Panc1 (cell line): ENCODE measurements at regions of chr16 and their contacts with region 1.

Region 1: GRCh38 chr16:85675251-85675927 is 13.4 kb downstream of the GINS2 start:
- DNase-seq: no peak
- ATAC-seq: peak; percentile 54; the same call in 1 of the 2 replicates
- H3K4me3 ChIP-seq: no peak overlapping the region
- H3K27ac ChIP-seq: no peak overlapping the region
- H3K4me1 ChIP-seq: peaks cover 22% of the 10 kb centered on the region
- H3K27me3 ChIP-seq: no peaks in the 10 kb centered on the region
- CTCF ChIP-seq: peak; percentile 52; the same call in 1 of the 2 replicates

Region 2: DNA sequence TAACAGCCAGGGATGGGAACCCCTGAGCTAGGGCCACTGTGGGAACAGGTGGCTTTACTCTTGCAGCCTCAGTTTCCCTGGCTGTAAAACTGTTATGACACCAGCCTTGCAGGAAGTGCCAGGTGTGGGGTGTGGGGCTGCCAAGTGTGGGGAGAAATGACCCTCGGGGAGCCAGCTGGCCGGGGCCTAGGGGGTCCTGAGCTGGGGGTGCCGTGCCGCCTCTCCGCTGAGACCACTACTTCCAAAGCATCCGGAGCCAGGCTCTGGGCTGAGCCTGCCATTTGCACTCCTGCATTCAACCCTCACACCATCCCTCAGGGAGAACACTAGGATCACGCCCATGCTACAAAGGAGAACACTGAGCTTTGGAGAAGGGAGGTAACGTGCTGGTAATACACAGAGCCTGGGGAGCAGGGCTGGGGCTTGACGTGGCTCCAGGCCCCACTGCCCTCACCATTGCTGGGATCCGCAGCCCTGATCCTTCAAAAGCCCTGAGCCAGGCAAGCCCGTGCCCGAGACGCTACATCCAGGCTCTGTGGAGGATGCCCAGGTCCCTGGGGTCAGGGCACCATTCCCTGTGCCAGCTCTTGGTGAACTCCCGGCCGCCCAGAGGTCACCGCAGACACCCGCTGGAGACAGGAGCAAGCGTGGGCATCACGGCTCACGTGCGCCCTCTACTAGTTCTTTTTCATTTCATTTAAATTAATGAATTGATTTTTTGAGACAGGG is 42.2 kb after region 1 on chr16:
- CTCF ChIA-PET with region 1: interaction called, 15 read pairs
- POLR2A ChIA-PET with region 1: no interaction called
- in situ Hi-C with region 1: no loop called
- intact Hi-C with region 1: loop called (anchors 5 kb)
- DNase-seq: no peak
- ATAC-seq: peak; percentile 80
- H3K4me3 ChIP-seq: no peak overlapping the region
- H3K27ac ChIP-seq: no peak overlapping the region
- H3K4me1 ChIP-seq: peaks cover 9% of the 10 kb centered on the region; the same call in 1 of the 2 replicates
- H3K27me3 ChIP-seq: no peaks in the 10 kb centered on the region
- CTCF ChIP-seq: peak; percentile 75